Activated B cell treated with CpG ODN at 0.5 μM for 24 hours (primary cell): ENCODE measurements at regions of chr6 and their contacts with region 1.

Region 1: GRCh38 chr6:156988276-156989158 is 211.3 kb downstream of the ARID1B start:
- DNase-seq: peak; percentile 41
- ATAC-seq: peak; percentile 90
- H3K4me3 Mint-ChIP-seq: peak overlapping the region; percentile 57
- H3K27ac Mint-ChIP-seq: peak overlapping the region; percentile 73
- H3K4me1 Mint-ChIP-seq: peaks cover 88% of the 10 kb centered on the region
- H3K27me3 Mint-ChIP-seq: no peaks in the 10 kb centered on the region
- CTCF ChIP-seq: no peak

Region 2: DNA sequence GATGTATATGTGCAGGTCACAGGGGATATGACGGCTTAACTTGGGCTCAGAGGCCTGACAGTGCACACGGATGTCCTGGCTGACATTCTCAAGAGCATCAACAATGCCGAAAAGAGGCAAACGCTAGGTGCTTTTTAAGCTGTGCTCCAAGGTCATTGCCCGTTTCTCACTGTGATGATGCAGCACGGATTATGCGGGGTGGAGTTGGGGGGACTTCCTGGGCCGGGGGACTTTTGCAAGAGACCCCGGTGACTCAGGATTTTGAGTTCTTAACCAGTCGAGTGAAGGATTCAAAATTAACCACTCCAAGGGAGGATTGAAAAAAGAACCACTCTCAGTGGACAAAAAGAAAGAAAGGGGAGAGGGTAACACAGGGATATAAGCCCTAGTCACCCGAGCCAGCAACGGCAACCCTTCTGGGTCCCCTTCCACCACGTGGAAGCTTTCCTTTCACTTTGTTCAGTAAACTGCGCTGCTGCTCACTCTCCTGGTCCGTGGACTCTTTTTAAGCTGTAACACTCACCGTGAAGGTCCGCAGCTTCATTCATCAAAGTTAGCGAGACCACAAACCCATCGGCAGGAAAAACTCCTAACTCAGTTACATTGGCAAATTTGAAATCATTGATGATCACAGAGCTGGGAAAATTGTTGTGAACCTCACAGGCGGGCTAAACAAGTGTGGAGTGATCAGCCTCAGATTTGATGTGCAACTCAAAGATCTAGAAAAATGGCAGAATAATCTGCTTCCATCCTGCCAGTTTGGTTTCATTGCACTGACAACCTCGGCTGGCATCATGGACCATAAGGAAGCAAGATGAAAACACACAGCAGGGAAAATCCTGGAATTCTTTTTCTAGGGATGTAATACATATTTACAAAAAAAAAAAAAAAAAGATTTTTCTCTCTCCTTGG is 12.0 kb before region 1 on chr6:
- CTCF ChIA-PET with region 1: interaction called, 5 read pairs
- POLR2A ChIA-PET with region 1: interaction called, 4 read pairs
- intact Hi-C with region 1: loop called (anchors 1 kb)
- DNase-seq: no peak
- ATAC-seq: peak; percentile 69
- H3K4me3 Mint-ChIP-seq: peak overlapping the region; percentile 79
- H3K27ac Mint-ChIP-seq: peak overlapping the region; percentile 84
- H3K4me1 Mint-ChIP-seq: peaks cover 94% of the 10 kb centered on the region
- H3K27me3 Mint-ChIP-seq: no peaks in the 10 kb centered on the region
- CTCF ChIP-seq: no peak